PC-9 (cell line): ENCODE measurements at regions of chr20 and their contacts with region 1.

Region 1: GRCh38 chr20:49278036-49278817 is at the start of gene ZNFX1:
- DNase-seq: peak; percentile 94 to 99
- H3K4me3 ChIP-seq: peak within 1 kb of the TSS; percentile 98
- H3K27ac ChIP-seq: peak within 1 kb of the TSS; percentile 91
- H3K4me1 ChIP-seq: peaks cover 52% of the 10 kb centered on the region
- H3K27me3 ChIP-seq: peaks cover 20% of the 10 kb centered on the region
- CTCF ChIP-seq: no peak
- total RNA-seq, gene ZNFX1: 24.1 and 29.7 TPM in 2 replicates

Region 2: GRCh38 chr20:49151436-49151835 is 126.8 kb before region 1 on chr20:
- CTCF ChIA-PET with region 1: interaction called, 12 read pairs
- POLR2A ChIA-PET with region 1: no interaction called
- intact Hi-C with region 1: no loop called
- DNase-seq: no peak
- H3K4me3 ChIP-seq: no peak overlapping the region
- H3K27ac ChIP-seq: no peak overlapping the region
- H3K4me1 ChIP-seq: no peaks in the 10 kb centered on the region
- H3K27me3 ChIP-seq: no peaks in the 10 kb centered on the region
- CTCF ChIP-seq: no peak

Region 3: DNA sequence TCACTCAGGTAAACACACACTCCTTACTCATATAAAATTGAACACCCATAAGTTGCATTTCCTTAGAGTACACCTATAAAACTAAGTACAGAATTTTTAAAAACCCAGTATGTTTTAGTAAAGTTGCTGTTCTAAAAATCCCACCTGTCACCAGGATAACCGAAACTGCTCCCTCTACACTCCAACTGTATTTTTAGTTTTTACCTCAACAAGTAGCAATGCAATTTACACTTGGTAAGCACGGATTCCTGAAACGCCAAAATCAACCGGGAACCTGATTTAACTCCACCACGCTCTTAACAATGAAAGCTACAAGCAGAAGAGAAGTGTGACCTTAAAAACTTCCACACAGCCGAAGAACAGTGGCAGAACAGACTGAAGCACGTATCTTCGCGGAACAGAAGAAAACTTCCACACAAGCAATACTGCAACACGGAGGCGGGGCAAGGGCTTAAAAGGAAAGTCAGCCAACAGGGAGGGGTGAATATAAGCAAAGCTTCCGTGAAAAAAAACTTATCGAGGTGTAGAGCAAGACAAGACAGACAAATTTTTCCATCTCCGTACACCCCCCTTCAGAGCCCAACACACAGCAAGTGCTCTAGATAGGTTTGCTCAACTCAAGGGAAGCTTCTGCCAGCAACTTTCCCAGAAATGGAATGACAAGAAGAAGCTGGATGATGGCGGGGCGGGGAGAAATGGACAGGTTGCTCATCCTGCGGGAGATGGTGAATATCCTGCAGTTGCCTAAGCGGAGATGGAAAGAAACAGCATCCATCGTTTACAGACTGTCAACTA is 91.5 kb before region 1 on chr20:
- CTCF ChIA-PET with region 1: no interaction called
- POLR2A ChIA-PET with region 1: no interaction called
- intact Hi-C with region 1: loop called (anchors 1 kb)
- DNase-seq: peak; percentile 49 to 52
- H3K4me3 ChIP-seq: peak overlapping the region; percentile 99
- H3K27ac ChIP-seq: peak overlapping the region; percentile 16
- H3K4me1 ChIP-seq: peaks cover 7% of the 10 kb centered on the region
- H3K27me3 ChIP-seq: no peaks in the 10 kb centered on the region
- CTCF ChIP-seq: no peak

Region 4: DNA sequence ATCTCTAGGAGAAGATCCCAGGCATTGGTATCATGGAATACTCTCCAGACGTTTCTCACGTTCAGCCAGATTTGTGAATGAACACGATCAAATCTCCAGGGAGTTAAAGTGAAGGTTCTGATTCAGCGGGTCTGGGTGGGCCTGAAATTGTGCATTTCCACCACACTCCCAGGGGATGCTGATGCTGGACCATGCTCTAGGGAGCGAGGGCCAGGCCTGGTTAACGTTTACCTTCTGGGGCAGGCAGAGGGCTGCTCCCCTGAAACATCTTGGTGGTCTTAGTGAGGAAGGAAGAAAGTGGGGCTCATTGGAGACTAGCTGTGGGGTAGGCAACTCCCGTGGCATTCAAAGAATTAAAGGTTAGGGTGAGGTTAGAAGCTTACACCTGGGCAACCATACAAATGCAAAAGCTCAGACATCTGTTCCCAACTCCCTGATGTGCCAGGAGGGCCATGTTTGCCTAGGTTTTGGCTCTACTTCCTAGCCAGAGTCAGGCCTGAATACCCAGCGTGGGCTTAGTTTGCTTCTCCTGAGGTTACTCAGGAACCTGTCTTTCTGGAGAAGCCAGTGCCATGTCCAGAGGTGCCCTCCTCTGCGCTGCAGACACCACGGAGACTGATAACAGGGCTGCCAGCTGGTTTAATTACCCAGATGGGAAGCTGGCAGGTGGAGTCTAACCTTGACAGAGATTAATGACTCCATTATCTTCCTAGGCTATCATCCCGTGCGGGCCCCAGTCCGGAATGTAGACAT is 28.5 kb after region 1 on chr20:
- CTCF ChIA-PET with region 1: no interaction called
- POLR2A ChIA-PET with region 1: no interaction called
- intact Hi-C with region 1: loop called (anchors 1 kb)
- DNase-seq: peak; percentile 83 to 86
- H3K4me3 ChIP-seq: no peak overlapping the region
- H3K27ac ChIP-seq: no peak overlapping the region
- H3K4me1 ChIP-seq: peaks cover 6% of the 10 kb centered on the region
- H3K27me3 ChIP-seq: no peaks in the 10 kb centered on the region
- CTCF ChIP-seq: no peak

Region 5: GRCh38 chr20:49323622-49324238 is 45.5 kb after region 1 on chr20:
- CTCF ChIA-PET with region 1: interaction called, 4 read pairs
- POLR2A ChIA-PET with region 1: no interaction called
- intact Hi-C with region 1: loop called (anchors 1 kb)
- DNase-seq: peak; percentile 58 to 66
- H3K4me3 ChIP-seq: no peak overlapping the region
- H3K27ac ChIP-seq: no peak overlapping the region
- H3K4me1 ChIP-seq: no peaks in the 10 kb centered on the region
- H3K27me3 ChIP-seq: peaks cover 27% of the 10 kb centered on the region
- CTCF ChIP-seq: peak; percentile 48; the same call in 1 of the 2 replicates

Region 6: DNA sequence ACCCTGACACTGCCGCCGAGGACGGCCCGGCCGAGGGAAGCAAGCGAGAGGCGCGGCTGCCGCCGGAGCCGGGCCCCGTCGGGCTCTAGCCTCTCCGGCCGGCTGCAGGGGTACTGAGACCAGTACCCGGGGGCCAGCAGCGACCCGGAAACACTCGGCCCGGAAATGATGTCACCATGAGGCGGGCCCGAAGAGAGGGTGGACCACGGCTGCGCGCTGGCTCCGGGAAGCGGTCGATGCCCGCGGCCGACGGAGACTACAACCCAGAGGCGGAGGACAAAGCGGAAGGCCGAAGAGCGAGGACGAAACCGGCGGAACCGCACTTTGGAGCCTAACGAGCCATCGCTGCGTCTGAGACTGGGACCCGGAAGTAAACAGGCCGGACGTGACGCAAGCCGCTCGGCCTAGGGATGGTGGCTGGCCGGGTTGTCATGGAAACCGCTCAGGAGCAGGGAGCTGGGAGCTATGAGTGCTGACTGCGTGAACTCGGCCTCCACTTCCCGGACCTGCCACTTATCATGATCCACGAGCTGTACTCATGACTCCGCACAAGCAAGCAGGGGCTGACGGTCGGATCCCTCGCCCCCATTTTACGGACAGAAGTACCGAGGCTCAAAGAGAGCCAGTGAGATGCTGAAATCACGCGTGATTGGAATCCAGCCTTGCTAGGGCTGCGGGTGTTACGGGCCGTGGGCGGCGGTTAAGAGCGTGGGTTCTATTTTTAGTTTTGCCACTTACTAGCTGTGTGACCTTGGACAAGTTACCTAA is 637.3 kb after region 1 on chr20 and contains the start of gene SPATA2:
- CTCF ChIA-PET with region 1: no interaction called
- POLR2A ChIA-PET with region 1: interaction called, 21 read pairs
- intact Hi-C with region 1: no loop called
- DNase-seq: peak; percentile 90 to 93
- H3K4me3 ChIP-seq: peak within 1 kb of the TSS; percentile 90
- H3K27ac ChIP-seq: peak within 1 kb of the TSS; percentile 96
- H3K4me1 ChIP-seq: peaks cover 32% of the 10 kb centered on the region
- H3K27me3 ChIP-seq: no peaks in the 10 kb centered on the region
- CTCF ChIP-seq: no peak; the same call in 1 of the 2 replicates
- total RNA-seq, gene SPATA2: 7.3 and 10.9 TPM in 2 replicates